ENCODE measurements at regions of chr12 and their contacts with region 1.

Region 1: GRCh38 chr12:68223083-68223747 is 2.4 kb downstream of the IL26 start:
- DNase-seq: peak; percentile 77
- H3K4me3 ChIP-seq: no peak overlapping the region
- H3K27ac ChIP-seq: no peak overlapping the region
- H3K4me1 ChIP-seq: no peaks in the 10 kb centered on the region
- H3K27me3 ChIP-seq: no peaks in the 10 kb centered on the region
- CTCF ChIP-seq: peak; percentile 74 to 93 (median 86)
- EP300 ChIP-seq: no peak
- POLR2A ChIP-seq: no peak
- RAD21 ChIP-seq: peak; percentile 98

Region 2: DNA sequence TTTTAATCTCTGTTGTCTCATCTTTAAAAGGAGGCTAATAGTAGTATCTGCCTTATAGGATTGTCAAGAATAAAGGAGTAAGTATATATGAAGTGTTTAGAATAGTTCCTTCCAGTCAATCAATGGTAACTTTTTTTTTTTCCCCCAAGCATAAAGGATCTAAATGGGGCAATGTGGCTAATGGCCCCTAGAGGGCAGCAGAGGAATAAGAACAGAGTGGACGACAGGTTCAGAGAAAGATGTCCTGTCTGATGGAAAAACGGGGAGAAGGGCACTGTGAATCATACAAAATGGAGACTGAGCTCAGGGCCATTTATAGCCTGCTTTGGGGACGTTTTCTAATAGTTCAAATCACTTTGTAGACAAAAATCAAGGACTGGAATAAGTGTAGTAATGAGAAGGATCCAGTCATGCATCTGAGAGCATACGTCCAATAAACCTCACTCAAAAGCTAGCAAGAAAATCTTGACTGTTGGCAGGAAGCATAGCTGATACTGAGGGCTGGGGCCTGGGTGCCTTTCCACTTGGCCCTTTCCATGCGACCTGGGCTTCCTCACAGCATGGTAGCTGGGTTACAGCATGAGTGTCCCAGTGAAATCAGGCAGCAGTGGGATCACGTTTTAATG is 182.7 kb before region 1 on chr12:
- CTCF ChIA-PET with region 1: interaction called, 25 read pairs
- POLR2A ChIA-PET with region 1: no interaction called
- DNase-seq: peak in 1 of 2 experiments; percentile 67
- H3K4me3 ChIP-seq: no peak overlapping the region
- H3K27ac ChIP-seq: no peak overlapping the region
- H3K4me1 ChIP-seq: no peaks in the 10 kb centered on the region
- H3K27me3 ChIP-seq: no peaks in the 10 kb centered on the region
- CTCF ChIP-seq: peak; percentile 25 to 81 (median 76)
- EP300 ChIP-seq: no peak
- POLR2A ChIP-seq: no peak
- RAD21 ChIP-seq: peak; percentile 94 to 96

Region 3: GRCh38 chr12:68170726-68171125 is 52.5 kb before region 1 on chr12:
- CTCF ChIA-PET with region 1: no interaction called
- POLR2A ChIA-PET with region 1: no interaction called
- DNase-seq: no peak
- H3K4me3 ChIP-seq: no peak overlapping the region
- H3K27ac ChIP-seq: no peak overlapping the region
- H3K4me1 ChIP-seq: no peaks in the 10 kb centered on the region
- H3K27me3 ChIP-seq: no peaks in the 10 kb centered on the region
- CTCF ChIP-seq: no peak
- EP300 ChIP-seq: no peak
- POLR2A ChIP-seq: no peak
- RAD21 ChIP-seq: no peak

Region 4: DNA sequence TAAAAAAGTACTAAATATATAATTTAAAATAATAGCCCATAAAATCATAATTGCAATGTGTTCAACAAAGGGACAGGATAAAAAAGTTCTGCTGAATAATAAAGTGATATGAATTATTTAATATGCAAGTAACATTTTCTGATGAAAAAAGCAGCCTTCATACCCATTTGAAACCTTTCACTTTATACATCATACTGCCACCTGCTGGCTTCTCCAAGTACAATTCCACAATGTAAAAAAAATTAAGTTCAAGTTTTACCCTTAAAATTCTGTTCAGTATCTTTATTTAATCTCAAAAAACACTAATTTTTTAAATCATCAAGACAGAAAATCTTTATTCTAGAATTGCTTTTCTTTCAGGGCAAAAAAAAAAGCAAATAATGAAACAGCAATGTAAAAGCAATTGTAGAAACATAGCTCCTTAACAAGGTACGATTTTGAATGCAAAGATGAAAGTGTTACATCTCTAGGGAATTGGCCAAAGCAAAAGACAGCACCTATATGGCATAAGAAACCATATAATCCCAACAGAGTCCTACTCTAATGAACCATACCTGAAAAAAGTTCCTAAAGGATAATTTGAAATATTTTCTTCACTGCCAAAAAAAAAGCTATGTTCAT is 93.9 kb after region 1 on chr12:
- CTCF ChIA-PET with region 1: interaction called, 47 read pairs
- POLR2A ChIA-PET with region 1: no interaction called
- DNase-seq: no peak
- H3K4me3 ChIP-seq: no peak overlapping the region
- H3K27ac ChIP-seq: no peak overlapping the region
- H3K4me1 ChIP-seq: no peaks in the 10 kb centered on the region
- H3K27me3 ChIP-seq: no peaks in the 10 kb centered on the region
- CTCF ChIP-seq: peak in 2 of 3 experiments; percentile 5 to 34; a peak in 2 of 4 replicates
- EP300 ChIP-seq: no peak
- POLR2A ChIP-seq: no peak
- RAD21 ChIP-seq: peak; percentile 46 to 56

Region 5: DNA sequence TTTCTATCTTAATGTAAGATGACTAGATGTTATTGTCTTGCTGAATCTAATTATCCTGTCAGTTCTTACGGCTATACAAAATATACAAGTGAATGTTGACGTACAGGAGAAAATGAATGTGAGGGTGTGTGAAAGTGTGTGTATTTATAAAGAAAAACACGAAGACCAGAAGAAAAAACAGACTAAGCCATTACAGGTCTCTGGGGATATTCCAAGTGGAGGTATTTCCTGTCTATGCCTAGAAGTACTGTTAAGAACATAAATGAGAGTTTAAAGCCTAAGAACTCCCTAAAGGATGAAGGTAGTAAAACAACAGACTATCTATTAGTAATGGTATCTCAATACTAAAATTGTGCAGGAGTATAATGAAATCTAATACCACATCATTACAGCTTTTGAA is 101.3 kb after region 1 on chr12:
- CTCF ChIA-PET with region 1: interaction called, 12 read pairs
- POLR2A ChIA-PET with region 1: no interaction called
- DNase-seq: no peak
- H3K4me3 ChIP-seq: no peak overlapping the region
- H3K27ac ChIP-seq: no peak overlapping the region
- H3K4me1 ChIP-seq: no peaks in the 10 kb centered on the region; a peak in 1 of 7 replicates
- H3K27me3 ChIP-seq: no peaks in the 10 kb centered on the region
- CTCF ChIP-seq: no peak
- EP300 ChIP-seq: no peak
- POLR2A ChIP-seq: no peak
- RAD21 ChIP-seq: no peak

Measured in H1 (cell line).